ENCODE measurements at regions of chr6 and their contacts with region 1.

Region 1: DNA sequence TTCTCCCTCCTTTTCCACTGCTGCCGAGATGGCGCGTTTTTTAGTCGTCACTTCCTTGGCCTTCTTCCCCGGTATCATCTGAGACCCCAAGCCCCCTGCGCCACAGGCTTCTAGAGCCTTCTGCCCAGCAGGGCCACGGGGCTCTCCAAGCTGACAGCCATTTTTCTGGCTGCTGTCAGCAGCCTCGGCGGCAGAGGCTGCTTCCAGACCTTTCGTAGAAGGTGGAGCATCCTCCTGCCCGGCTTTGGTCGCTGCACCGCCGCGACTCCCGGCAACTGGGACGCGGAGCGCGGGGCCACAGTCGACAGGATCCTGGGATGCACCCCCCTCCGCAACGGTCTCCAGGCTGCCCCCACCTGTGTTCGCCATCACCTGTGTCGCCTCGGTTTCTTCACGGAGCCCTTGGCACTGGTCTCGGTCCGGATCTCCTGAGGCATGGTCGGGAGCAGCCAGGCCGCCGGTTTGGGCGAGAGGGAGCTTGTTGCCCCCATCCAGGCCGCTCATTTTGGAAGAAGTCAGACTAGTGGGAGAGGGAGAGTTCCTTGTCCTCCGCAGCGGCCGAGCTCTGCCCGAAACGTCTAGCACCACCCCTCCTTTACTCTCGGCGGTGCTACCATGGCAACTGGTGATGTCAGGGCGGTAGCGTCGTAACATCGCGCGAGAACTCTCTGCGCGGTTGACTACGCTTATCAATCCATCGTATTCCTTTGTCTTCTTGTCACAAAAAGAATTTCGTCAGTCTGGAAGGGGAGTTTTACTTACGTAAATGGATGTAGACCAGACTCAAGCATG is at the start of gene TSPYL4:
- DNase-seq: peak; percentile 95
- ATAC-seq: peak; percentile 95
- H3K4me3 ChIP-seq: peak within 1 kb of the TSS; percentile 86 to 92 (median 89)
- H3K27ac ChIP-seq: peak within 1 kb of the TSS; percentile 78
- H3K4me1 ChIP-seq: peaks cover 54% of the 10 kb centered on the region
- H3K27me3 ChIP-seq: no peaks in the 10 kb centered on the region
- CTCF ChIP-seq: peak; percentile 3; the same call in 1 of the 2 replicates
- EP300 ChIP-seq: no peak
- POLR2A ChIP-seq: peak; percentile 73 to 83; a peak in 3 of 4 replicates
- RAD21 ChIP-seq: no peak
- total RNA-seq, gene TSPYL4: 19.7 and 24.0 TPM in 2 replicates

Region 2: GRCh38 chr6:116268589-116269293 is 15.0 kb after region 1 on chr6:
- CTCF ChIA-PET with region 1: interaction called, 3 read pairs
- POLR2A ChIA-PET with region 1: interaction called, 10 read pairs
- in situ Hi-C with region 1: no loop called
- intact Hi-C with region 1: loop called (anchors 1 kb)
- DNase-seq: peak; percentile 88
- ATAC-seq: peak; percentile 93
- H3K4me3 ChIP-seq: no peak overlapping the region
- H3K27ac ChIP-seq: no peak overlapping the region
- H3K4me1 ChIP-seq: 0 out of 2 replicates have a peak, but pooled peaks cover 5% of the 10 kb centered on the region
- H3K27me3 ChIP-seq: no peaks in the 10 kb centered on the region
- CTCF ChIP-seq: peak; percentile 86
- EP300 ChIP-seq: no peak
- POLR2A ChIP-seq: no peak
- RAD21 ChIP-seq: peak; percentile 73

Region 3: DNA sequence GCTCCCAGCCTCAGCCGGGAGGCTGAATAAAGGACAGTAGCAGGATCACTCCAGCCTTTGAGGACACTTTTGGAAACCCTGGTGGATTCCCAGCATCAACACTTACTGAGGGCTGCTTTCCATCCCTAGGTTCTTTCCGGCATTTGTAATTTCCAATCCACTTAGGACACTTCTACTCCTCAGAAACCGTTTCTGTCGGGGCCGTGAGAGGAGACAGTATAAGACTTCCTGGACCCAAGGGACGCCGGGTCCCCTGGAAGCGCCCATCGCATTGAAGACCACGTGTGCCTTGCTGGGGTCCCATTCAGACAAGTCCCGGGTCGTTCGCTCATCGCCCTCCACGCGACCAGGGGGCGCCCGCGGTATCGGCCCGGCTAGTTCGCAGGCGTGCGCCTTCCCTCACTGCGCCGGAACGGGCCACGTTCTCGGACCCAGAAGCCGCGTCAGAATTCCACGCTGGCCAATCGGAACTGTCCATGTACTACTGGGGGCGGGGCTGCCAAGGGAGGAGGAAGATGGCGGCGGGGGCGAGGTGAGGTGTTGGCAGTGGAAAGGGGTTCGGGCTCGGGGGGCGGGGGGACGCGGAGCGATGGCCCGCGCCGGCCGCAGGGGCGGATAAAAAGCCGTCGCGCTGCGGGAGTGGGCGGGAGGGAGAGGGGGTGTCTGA is 1421.4 kb after region 1 on chr6 and contains the start of gene NUS1:
- CTCF ChIA-PET with region 1: no interaction called
- POLR2A ChIA-PET with region 1: no interaction called
- in situ Hi-C with region 1: no loop called
- intact Hi-C with region 1: loop called (anchors 5 kb)
- DNase-seq: peak; percentile 97
- ATAC-seq: peak; percentile 96
- H3K4me3 ChIP-seq: peak within 1 kb of the TSS; percentile 86 to 93 (median 88)
- H3K27ac ChIP-seq: peak within 1 kb of the TSS; percentile 62
- H3K4me1 ChIP-seq: peaks cover 55% of the 10 kb centered on the region
- H3K27me3 ChIP-seq: no peaks in the 10 kb centered on the region; a peak in 1 of 5 replicates
- CTCF ChIP-seq: peak; percentile 100
- EP300 ChIP-seq: peak; percentile 29 to 46; a peak in 1 of 4 replicates
- POLR2A ChIP-seq: peak; percentile 50 to 82
- RAD21 ChIP-seq: peak; percentile 62
- total RNA-seq, gene NUS1: 18.3 and 36.5 TPM in 2 replicates

Measured in HepG2 (cell line).